ENCODE measurements at regions of chr2 and their contacts with region 1.

Region 1: DNA sequence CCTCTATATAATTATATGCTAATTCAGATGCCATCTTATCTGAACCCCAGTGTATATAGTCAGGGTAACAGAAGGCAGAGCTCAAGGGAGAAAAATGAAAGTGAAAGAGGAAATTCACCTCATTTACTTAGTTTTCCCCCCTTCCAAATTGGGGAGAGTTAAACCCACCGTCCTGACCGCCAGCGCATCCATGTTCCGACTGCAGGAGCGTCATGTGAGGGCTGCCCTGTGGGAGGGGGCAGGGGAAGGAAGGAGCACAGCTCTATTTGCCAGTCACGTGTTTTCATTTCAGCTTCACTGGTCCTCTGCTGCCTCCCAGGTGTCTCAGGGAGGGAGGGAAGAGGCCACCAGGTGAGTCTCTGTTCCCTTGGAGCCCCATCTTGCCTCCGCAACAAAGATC is 13.2 kb downstream of the CNNM4 start:
- DNase-seq: no peak
- H3K4me3 ChIP-seq: no peak overlapping the region
- H3K27ac ChIP-seq: peak overlapping the region; percentile 58; the same call in 1 of the 2 replicates
- H3K4me1 ChIP-seq: peaks cover 0 to 4% (median 0%) of the 10 kb centered on the region in 4 experiments; a peak in 3 of 7 replicates
- H3K27me3 ChIP-seq: no peaks in the 10 kb centered on the region
- CTCF ChIP-seq: 0 out of 4 replicates have a peak, but pooled peaks of 1 of the 3 experiments have one; percentile 1
- EP300 ChIP-seq: no peak
- POLR2A ChIP-seq: no peak
- RAD21 ChIP-seq: no peak

Region 2: GRCh38 chr2:96788442-96789244 is 14.7 kb after region 1 on chr2:
- CTCF ChIA-PET with region 1: interaction called, 12 read pairs
- POLR2A ChIA-PET with region 1: no interaction called
- DNase-seq: no peak
- H3K4me3 ChIP-seq: no peak overlapping the region
- H3K27ac ChIP-seq: no peak overlapping the region
- H3K4me1 ChIP-seq: no peaks in the 10 kb centered on the region
- H3K27me3 ChIP-seq: no peaks in the 10 kb centered on the region
- CTCF ChIP-seq: no peak
- EP300 ChIP-seq: no peak
- POLR2A ChIP-seq: no peak
- RAD21 ChIP-seq: no peak

Measured in H1 (cell line).